Gastrocnemius medialis (tissue), 4 donors: ENCODE measurements at regions of chr1 and their contacts with region 1.

Region 1: DNA sequence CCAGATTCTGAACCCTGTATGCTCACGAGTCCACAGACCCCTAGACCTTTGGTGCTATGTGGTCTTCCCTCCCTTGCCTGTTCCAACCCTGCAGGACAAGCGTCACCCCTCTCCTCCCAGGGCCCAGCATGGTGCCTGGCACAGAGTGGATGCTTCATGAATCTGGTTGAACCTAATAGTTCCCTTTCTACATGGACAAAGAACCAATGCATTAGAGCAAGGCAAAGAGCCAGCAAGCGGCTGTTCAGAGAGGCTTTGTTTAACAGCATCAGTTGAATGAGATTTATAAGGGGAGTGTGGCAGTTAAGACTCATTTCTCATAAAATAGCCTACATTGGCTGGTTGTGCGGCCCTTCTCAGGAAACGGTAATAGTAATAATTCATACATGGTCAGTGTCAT is 14.9 kb downstream of the SLC26A9 start:
- DNase-seq: no peak
- ATAC-seq: no peak
- H3K4me3 ChIP-seq: no peak overlapping the region
- H3K27ac ChIP-seq: no peak overlapping the region
- H3K4me1 ChIP-seq: peaks cover 0 to 2% of the 10 kb centered on the region in 2 donors
- H3K27me3 ChIP-seq: no peaks in the 10 kb centered on the region
- CTCF ChIP-seq: no peak
- POLR2A ChIP-seq: no peak

Region 2: GRCh38 chr1:205945056-205945455 is 16.7 kb after region 1 on chr1:
- in situ Hi-C with region 1: no loop called
- intact Hi-C with region 1: loop called (anchors 2 kb)
- DNase-seq: no peak
- ATAC-seq: no peak
- H3K4me3 ChIP-seq: no peak overlapping the region
- H3K27ac ChIP-seq: no peak overlapping the region
- H3K4me1 ChIP-seq: peaks cover 0 to 5% of the 10 kb centered on the region in 2 donors
- H3K27me3 ChIP-seq: peaks cover 0 to 2% (median 0%) of the 10 kb centered on the region in 3 donors
- CTCF ChIP-seq: no peak
- POLR2A ChIP-seq: no peak